ENCODE measurements at regions of chr2 and their contacts with region 1.

Region 1: GRCh38 chr2:204145263-204145751 is 208.7 kb downstream of the ICOS start:
- DNase-seq: peak; percentile 62 to 86 (median 72)
- ATAC-seq: peak; percentile 98
- H3K4me3 ChIP-seq: peak overlapping the region; percentile 47
- H3K4me3 Mint-ChIP-seq: peak overlapping the region; percentile 87
- H3K27ac ChIP-seq: no peak overlapping the region
- H3K27ac Mint-ChIP-seq: no peak overlapping the region
- H3K4me1 ChIP-seq: peaks cover 8% of the 10 kb centered on the region
- H3K4me1 Mint-ChIP-seq: peaks cover 5% of the 10 kb centered on the region
- H3K27me3 ChIP-seq: peaks cover 0 to 4% of the 10 kb centered on the region in 2 experiments
- H3K27me3 Mint-ChIP-seq: peaks cover 9% of the 10 kb centered on the region
- CTCF ChIP-seq: peak; percentile 97

Region 2: GRCh38 chr2:203934041-203934492 is 211.2 kb before region 1 on chr2:
- CTCF ChIA-PET with region 1: interaction called, 3 read pairs
- POLR2A ChIA-PET with region 1: no interaction called
- intact Hi-C with region 1: loop called (anchors 10 kb)
- DNase-seq: peak in 9 of 14 experiments; percentile 32 to 71 (median 50)
- ATAC-seq: peak; percentile 40
- H3K4me3 ChIP-seq: peak overlapping the region; percentile 19
- H3K4me3 Mint-ChIP-seq: peak overlapping the region; percentile 83
- H3K27ac ChIP-seq: peak overlapping the region; percentile 67 to 82
- H3K27ac Mint-ChIP-seq: peak overlapping the region; percentile 93
- H3K4me1 ChIP-seq: peaks cover 41% of the 10 kb centered on the region
- H3K4me1 Mint-ChIP-seq: peaks cover 72% of the 10 kb centered on the region
- H3K27me3 ChIP-seq: no peaks in the 10 kb centered on the region
- H3K27me3 Mint-ChIP-seq: no peaks in the 10 kb centered on the region
- CTCF ChIP-seq: no peak

Region 3: DNA sequence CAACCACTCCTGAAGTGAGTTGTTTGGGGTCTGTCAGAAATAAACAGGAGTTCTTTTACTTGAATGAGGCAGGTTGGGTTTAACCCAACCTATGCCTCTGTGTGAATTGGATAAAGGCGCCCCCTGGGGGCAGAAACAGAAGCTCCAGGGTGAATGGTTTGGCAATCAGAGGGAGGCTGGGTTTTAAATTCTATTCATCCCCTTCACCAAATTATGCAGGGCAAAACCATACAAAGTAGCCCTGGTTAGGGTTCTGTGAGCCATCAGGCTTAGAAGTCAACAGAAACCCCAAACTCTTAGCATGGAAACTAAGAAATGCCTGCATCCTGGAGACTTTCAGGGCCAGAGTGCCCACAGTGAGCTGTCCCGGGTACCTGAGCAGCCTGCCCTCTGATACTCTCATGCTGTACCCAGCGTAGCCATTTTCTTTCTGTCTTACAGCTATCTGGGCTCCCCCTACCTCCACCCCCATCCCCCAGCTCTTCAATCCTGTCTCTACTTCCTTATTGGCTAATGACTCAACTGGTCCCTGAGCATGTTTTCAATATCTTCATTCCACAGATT is 32.8 kb after region 1 on chr2:
- CTCF ChIA-PET with region 1: interaction called, 18 read pairs
- POLR2A ChIA-PET with region 1: interaction called, 6 read pairs
- intact Hi-C with region 1: loop called (anchors 1 to 2 kb)
- DNase-seq: peak; percentile 48 to 82 (median 62)
- ATAC-seq: peak; percentile 69
- H3K4me3 ChIP-seq: no peak overlapping the region
- H3K4me3 Mint-ChIP-seq: no peak overlapping the region
- H3K27ac ChIP-seq: no peak overlapping the region
- H3K27ac Mint-ChIP-seq: no peak overlapping the region
- H3K4me1 ChIP-seq: peaks cover 4% of the 10 kb centered on the region
- H3K4me1 Mint-ChIP-seq: no peaks in the 10 kb centered on the region
- H3K27me3 ChIP-seq: peaks cover 5 to 6% of the 10 kb centered on the region in 2 experiments
- H3K27me3 Mint-ChIP-seq: peaks cover 10% of the 10 kb centered on the region
- CTCF ChIP-seq: peak; percentile 66

Region 4: DNA sequence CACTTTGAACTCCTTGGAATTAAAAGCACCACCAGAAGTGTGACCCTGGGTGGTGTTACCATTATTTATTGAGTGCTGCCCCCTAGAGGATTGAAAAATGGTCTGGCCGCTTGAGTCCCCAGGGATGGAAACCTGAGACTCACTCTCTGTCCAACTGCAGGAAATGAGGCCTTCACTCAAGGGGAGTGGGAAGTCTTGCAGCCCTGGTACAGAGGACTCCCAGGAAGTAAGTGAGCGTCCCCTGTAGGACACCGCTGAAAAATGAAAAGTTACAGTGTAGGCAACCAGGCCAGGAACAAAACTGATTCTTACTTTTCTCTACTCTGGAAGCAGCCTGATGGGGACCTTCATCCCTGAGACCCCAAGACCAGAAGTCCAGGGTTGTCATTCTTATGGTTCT is 1534.8 kb after region 1 on chr2:
- CTCF ChIA-PET with region 1: interaction called, 4 read pairs
- POLR2A ChIA-PET with region 1: no interaction called
- intact Hi-C with region 1: loop called (anchors 10 kb)
- DNase-seq: peak in 9 of 14 experiments; percentile 10 to 68 (median 22)
- ATAC-seq: no peak
- H3K4me3 ChIP-seq: no peak overlapping the region
- H3K4me3 Mint-ChIP-seq: peak overlapping the region; percentile 70
- H3K27ac ChIP-seq: no peak overlapping the region
- H3K27ac Mint-ChIP-seq: no peak overlapping the region
- H3K4me1 ChIP-seq: peaks cover 14% of the 10 kb centered on the region
- H3K4me1 Mint-ChIP-seq: peaks cover 23% of the 10 kb centered on the region
- H3K27me3 ChIP-seq: peaks cover 39 to 40% of the 10 kb centered on the region in 2 experiments
- H3K27me3 Mint-ChIP-seq: peaks cover 44% of the 10 kb centered on the region
- CTCF ChIP-seq: peak; percentile 60

Region 5: DNA sequence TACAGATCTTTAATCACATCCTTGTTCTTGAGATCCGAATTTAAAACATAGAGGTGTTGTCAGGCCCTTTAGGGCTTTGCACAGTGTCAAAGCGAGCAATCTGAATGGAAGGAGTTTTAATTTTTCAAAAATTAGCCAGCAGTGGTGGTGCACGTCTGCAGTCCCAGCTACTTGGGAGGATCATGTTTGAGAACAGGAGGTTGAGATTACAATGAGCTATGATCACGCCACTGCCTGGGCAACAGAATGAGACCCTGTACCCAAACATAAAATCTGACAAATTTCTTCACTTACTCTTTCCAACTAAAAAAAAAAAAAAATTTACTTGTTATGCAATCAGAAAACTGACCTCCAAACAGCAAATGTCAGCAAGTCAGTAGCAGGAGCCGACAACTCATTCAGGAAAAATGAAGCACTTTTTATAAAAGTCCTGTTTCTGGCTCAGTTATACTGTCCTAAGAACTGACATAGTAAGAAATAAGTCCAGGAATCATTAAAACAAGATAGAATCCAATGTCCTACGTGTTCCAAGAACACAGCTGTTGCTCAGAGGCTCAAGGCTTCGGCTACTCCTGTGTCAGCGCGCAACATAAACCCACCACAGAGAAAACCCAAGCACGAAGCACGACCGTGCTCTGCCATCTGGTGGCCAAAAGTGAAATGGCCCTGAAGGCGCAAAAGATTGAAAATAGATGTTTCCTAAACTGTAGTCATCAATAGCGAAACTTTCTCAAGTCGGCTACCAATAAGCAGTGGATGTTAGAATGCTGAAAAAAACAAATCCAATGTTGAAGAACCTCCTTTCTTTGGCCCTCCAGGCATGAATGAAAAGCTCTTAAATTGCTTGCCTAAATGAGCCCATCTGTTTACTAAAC is 1802.6 kb after region 1 on chr2:
- CTCF ChIA-PET with region 1: interaction called, 3 read pairs
- POLR2A ChIA-PET with region 1: no interaction called
- intact Hi-C with region 1: loop called in 1 of 2 experiments (anchors 2 kb)
- DNase-seq: peak; percentile 18 to 65 (median 42)
- ATAC-seq: peak; percentile 68
- H3K4me3 ChIP-seq: no peak overlapping the region
- H3K4me3 Mint-ChIP-seq: no peak overlapping the region
- H3K27ac ChIP-seq: no peak overlapping the region
- H3K27ac Mint-ChIP-seq: no peak overlapping the region
- H3K4me1 ChIP-seq: peaks cover 7% of the 10 kb centered on the region
- H3K4me1 Mint-ChIP-seq: no peaks in the 10 kb centered on the region
- H3K27me3 ChIP-seq: peaks cover 0 to 4% of the 10 kb centered on the region in 2 experiments
- H3K27me3 Mint-ChIP-seq: peaks cover 23% of the 10 kb centered on the region
- CTCF ChIP-seq: peak; percentile 89

Measured in CD4-positive, alpha-beta T cell (primary cell).